HEK293 (cell line): ENCODE measurements at regions of chr4 and their contacts with region 1.

Region 1: DNA sequence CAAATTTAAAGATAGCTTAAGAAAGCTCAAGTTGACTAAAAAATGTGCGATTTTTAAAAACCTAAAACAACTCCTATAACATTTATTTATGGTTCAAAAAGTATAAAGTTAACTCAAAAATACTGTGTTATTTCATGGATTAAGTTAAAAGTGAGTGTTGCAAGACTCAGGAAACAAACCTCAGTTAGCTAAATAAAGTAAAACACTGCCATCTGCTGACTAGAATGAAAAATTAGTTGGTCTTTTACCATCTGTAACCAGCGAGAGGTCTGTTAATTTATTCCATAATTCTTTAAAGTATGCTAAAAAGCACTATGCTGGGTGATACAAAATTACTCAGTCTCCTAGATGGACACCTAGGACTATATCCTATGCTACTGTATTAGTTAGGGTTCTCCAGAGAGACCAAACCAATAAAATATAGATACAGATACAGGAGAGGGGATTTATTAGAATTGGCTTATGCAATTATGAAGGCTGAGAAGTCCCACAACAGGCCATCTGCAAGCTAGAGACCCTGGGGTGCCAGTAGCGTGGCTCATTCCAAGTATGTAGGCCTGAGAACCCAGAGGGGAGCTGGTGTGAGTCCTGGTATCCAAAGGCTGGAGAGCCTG is 4.9 kb upstream of the WDFY3 start:
- H3K4me3 ChIP-seq: no peak overlapping the region
- H3K27ac ChIP-seq: no peak overlapping the region
- H3K4me1 ChIP-seq: no peaks in the 10 kb centered on the region
- CTCF ChIP-seq: no peak; the same call in 1 of the 2 replicates

Region 2: GRCh38 chr4:84578540-84579402 is 392.7 kb before region 1 on chr4:
- CTCF ChIA-PET with region 1: interaction called, 24 read pairs
- POLR2A ChIA-PET with region 1: interaction called, 6 read pairs
- H3K4me3 ChIP-seq: no peak overlapping the region
- H3K27ac ChIP-seq: no peak overlapping the region
- H3K4me1 ChIP-seq: no peaks in the 10 kb centered on the region
- CTCF ChIP-seq: no peak

Region 3: DNA sequence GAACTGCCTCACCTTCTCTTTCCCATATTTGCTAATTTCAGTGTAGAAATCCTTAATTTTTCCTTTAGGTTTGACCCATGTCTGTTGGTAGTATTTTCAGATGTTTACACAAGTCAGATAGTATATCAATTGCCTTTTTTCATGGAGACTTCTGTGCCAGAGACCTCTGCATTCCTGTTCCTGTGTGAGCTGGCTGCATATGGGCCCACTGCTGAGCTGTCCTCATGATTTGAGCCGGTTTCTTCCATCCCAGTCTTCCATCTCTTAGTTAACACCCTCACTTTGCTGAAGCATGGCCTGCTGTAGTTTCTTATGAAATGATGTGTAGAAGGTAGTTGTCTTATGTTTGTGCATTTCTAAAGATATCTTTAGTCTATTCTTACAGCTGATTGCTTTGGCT is 348.5 kb before region 1 on chr4:
- CTCF ChIA-PET with region 1: no interaction called
- POLR2A ChIA-PET with region 1: no interaction called
- H3K4me3 ChIP-seq: no peak overlapping the region
- H3K27ac ChIP-seq: no peak overlapping the region
- H3K4me1 ChIP-seq: no peaks in the 10 kb centered on the region
- CTCF ChIP-seq: no peak

Region 4: DNA sequence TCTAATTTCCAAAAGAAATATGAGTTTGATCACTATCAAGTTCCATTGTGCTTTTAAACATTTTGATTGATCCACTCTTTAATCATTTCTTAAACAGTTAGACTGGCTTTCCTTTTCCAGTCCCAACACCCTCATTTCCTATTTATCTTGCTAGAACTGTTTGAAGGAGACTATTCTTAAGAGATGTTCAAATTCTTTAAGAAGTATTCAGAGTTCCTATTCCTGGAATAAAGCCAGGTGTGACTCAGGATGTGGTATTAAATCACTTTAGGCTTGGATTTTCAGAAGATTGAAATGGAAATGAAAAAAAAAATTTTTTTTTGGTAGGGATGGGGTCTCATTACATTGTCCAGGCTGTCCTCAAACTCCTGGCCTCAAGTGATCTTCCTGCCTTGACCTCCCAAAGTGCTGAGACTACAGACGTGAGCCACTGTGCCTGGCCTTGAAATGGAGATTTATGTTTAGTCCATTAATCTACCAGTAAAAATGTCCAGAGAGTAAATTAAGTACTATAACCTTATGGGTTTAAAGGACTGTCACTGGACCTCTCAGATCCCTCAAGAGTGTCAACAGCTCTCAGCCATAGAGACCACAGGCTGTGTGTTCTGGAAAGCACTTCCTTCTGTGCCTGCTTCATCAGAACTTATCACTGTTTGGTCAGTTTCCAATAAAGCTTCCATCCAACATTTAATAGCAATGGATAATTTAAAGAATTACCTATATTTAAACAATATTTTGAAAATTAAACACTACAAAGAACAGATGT is 297.8 kb before region 1 on chr4:
- CTCF ChIA-PET with region 1: no interaction called
- POLR2A ChIA-PET with region 1: no interaction called
- H3K4me3 ChIP-seq: no peak overlapping the region
- H3K27ac ChIP-seq: no peak overlapping the region
- H3K4me1 ChIP-seq: no peaks in the 10 kb centered on the region
- CTCF ChIP-seq: no peak

Region 5: DNA sequence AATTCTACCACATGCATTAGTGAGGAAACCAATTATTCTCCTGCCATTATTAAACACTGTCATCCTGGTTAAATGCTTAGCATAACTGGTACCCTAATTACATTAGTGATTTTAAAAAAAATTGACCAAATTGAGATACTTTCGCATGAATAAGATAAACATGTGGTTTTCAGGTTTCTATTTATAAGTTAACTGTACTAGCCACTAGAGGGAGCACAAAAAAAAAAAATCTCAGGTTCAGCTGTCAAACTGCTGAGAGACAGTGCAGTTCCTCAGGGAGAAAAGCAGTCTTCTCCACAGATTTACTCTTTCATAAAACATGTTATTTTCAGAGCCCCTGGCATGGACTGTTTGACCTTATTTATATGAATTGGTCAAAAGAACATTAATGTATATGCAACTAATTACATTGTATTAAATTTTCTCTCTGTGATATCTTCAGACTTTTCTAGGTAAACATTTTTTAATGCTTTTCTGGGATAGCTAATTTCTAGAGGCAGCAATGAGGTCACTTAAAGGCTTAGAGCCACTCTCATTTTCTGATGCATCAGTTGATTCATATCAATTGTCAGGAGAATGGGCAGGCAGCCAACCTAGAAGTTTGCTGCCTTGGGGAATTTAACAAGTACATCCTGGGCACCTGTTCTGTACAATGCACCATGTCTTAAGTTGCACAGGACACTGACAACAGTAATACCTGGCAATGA is 221.0 kb before region 1 on chr4:
- CTCF ChIA-PET with region 1: interaction called, 32 read pairs
- POLR2A ChIA-PET with region 1: no interaction called
- H3K4me3 ChIP-seq: no peak overlapping the region
- H3K27ac ChIP-seq: no peak overlapping the region
- H3K4me1 ChIP-seq: no peaks in the 10 kb centered on the region
- CTCF ChIP-seq: no peak

Region 6: DNA sequence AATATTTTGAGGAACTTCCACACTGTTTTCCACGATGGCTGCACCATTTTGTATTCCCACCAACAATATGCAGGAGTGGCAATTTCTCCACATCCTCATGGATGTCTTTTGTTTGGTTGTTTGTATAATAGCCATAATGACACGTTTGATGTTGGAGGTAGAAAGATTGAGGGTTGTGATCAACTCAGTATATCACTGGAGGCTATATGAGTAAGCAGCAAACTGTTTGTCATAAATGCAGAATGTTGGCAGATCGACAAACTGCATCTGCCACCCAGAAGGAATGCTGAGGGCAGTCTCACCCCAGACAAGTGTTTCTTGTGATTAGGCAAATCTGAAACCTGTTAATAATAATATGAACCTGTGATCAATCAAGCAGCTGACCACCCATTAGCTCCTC is 238.9 kb after region 1 on chr4:
- CTCF ChIA-PET with region 1: no interaction called
- POLR2A ChIA-PET with region 1: no interaction called
- H3K4me3 ChIP-seq: no peak overlapping the region
- H3K27ac ChIP-seq: no peak overlapping the region
- H3K4me1 ChIP-seq: no peaks in the 10 kb centered on the region
- CTCF ChIP-seq: no peak